Activated CD4-positive, alpha-beta T cell treated with anti-CD3 and anti-CD28 coated beads, Interleukin-2, amount 10 ng/mL, durations not matched to agents 7 days and 5 days (primary cell): ENCODE measurements at regions of chr22 and their contacts with region 1.

Region 1: GRCh38 chr22:46563381-46564083 is 26.1 kb upstream of the CELSR1 start:
- DNase-seq: peak; percentile 82
- H3K4me3 Mint-ChIP-seq: no peak overlapping the region
- H3K27ac Mint-ChIP-seq: peak overlapping the region; percentile 31
- H3K4me1 Mint-ChIP-seq: peaks cover 18% of the 10 kb centered on the region
- H3K27me3 Mint-ChIP-seq: no peaks in the 10 kb centered on the region

Region 2: DNA sequence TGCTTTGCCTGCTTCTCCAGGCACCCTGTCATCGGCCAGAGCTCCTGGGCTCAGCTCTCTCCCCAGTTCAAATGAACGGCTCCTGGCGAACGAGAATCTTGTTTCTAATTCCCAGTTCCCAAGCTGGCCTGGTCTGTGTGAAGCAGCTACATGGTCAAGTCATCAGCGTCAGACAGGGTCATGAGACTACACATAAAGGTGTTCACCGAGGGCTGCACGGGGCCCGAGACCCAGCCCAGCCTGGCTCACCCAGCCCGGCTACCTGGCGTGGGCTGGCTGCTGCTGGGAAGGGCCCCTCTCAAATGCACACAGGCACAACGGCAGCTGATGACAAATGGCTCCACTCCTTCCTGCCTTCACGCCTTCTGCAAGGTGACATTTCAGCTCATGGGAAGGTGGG is 11.5 kb before region 1 on chr22:
- CTCF ChIA-PET with region 1: interaction called, 12 read pairs
- POLR2A ChIA-PET with region 1: no interaction called
- DNase-seq: no peak
- H3K4me3 Mint-ChIP-seq: no peak overlapping the region
- H3K27ac Mint-ChIP-seq: no peak overlapping the region
- H3K4me1 Mint-ChIP-seq: no peaks in the 10 kb centered on the region
- H3K27me3 Mint-ChIP-seq: no peaks in the 10 kb centered on the region

Region 3: DNA sequence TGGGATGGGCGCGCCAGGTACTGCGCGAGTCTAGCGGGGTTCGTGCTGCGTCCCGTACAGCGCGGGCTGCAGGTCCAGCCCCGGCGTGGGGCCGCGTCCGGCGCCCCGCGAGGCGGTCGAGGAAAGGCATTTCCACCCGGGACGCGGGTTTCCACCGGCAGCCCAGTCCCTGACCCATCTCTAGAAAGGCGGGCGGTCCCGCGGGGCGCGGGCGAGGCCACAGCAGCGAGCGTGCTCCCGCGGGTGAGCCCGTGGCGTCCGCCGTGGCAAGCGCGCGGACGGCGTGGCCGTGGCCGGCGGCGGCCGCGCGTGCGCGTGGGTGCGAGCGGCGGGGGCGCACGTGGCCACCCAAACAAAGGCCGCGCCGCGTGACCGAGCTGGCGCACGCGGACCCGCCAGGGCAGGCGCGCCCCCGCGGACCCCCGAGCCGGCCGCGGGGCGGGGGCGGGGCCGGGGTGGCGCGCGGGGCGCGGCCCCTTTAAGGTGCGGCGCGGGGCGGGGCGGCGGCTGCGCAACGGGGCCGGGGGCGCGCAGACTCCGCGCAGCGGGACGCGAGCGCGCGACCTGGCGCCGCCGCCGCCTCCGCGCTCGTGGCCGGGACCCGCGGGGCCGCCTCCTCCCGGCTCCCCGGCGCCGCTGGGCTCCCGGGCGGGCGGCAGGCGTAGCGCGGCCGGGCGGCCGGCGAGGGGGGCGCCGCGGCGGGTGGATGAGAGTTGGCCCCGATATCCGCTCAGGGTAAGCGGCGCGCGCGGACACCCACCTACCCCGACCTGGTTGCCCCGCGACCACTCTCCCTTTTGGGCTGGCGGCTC is 13.2 kb after region 1 on chr22:
- CTCF ChIA-PET with region 1: interaction called, 14 read pairs
- POLR2A ChIA-PET with region 1: no interaction called
- DNase-seq: peak; percentile 38
- H3K4me3 Mint-ChIP-seq: peak overlapping the region; percentile 77
- H3K27ac Mint-ChIP-seq: peak overlapping the region; percentile 86
- H3K4me1 Mint-ChIP-seq: peaks cover 49% of the 10 kb centered on the region
- H3K27me3 Mint-ChIP-seq: no peaks in the 10 kb centered on the region

Region 4: DNA sequence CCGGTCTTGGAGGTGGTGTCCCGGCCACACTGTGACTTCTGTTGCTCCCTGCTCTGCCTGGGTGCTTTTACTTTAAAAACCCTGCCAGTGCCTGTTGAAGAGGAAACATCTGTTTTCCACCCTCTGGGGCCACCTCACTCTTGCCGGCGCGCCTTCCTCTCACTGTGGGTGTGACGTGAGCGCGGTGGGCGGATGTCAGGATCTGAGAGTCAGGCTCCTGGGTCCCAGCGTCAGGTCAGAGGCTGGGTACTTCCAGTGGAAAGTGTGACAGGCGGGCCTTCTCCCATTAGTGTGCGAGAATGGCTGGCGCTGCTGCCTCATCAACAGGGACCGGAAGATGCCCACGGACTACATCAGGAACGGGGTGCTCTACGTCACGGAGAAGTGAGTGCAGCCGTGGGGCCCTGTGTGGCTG is 110.8 kb after region 1 on chr22:
- CTCF ChIA-PET with region 1: interaction called, 12 read pairs
- POLR2A ChIA-PET with region 1: no interaction called
- DNase-seq: peak; percentile 92
- H3K4me3 Mint-ChIP-seq: peak overlapping the region; percentile 80
- H3K27ac Mint-ChIP-seq: peak overlapping the region; percentile 96
- H3K4me1 Mint-ChIP-seq: peaks cover 27% of the 10 kb centered on the region
- H3K27me3 Mint-ChIP-seq: no peaks in the 10 kb centered on the region

Region 5: GRCh38 chr22:46833228-46833627 is 269.7 kb after region 1 on chr22:
- CTCF ChIA-PET with region 1: no interaction called
- POLR2A ChIA-PET with region 1: no interaction called
- DNase-seq: no peak
- H3K4me3 Mint-ChIP-seq: no peak overlapping the region
- H3K27ac Mint-ChIP-seq: no peak overlapping the region
- H3K4me1 Mint-ChIP-seq: peaks cover 1% of the 10 kb centered on the region
- H3K27me3 Mint-ChIP-seq: no peaks in the 10 kb centered on the region